ENCODE measurements at regions of chr3 and their contacts with region 1.

Region 1: GRCh38 chr3:194486540-194487288 is at the start of gene ATP13A3:
- DNase-seq: peak; percentile 98
- H3K4me3 ChIP-seq: peak within 1 kb of the TSS; percentile 47 to 86 (median 62)
- H3K27ac ChIP-seq: peak within 1 kb of the TSS; percentile 78 to 95 (median 91)
- H3K4me1 ChIP-seq: peaks cover 6 to 90% (median 58%) of the 10 kb centered on the region in 6 donors
- H3K27me3 ChIP-seq: no peaks in the 10 kb centered on the region
- CTCF ChIP-seq: peak in 1 of 11 experiments; percentile 18
- POLR2A ChIP-seq: peak in 2 of 3 donors; percentile 19 to 63
- total RNA-seq, gene ATP13A3: 69.4 to 142 (median 87.5) TPM

Region 2: GRCh38 chr3:194586836-194587235 is 100.1 kb after region 1 on chr3:
- intact Hi-C with region 1: loop called (anchors 5 kb)
- DNase-seq: no peak
- H3K4me3 ChIP-seq: no peak overlapping the region
- H3K27ac ChIP-seq: peak overlapping the region in 6 of 8 donors; percentile 0 to 58 (median 32)
- H3K4me1 ChIP-seq: peaks cover 7 to 43% (median 21%) of the 10 kb centered on the region in 6 donors
- H3K27me3 ChIP-seq: no peaks in the 10 kb centered on the region
- CTCF ChIP-seq: no peak
- POLR2A ChIP-seq: no peak

Measured in spleen (tissue), 13 donors.